ENCODE measurements at regions of chr2 and their contacts with region 1.

Region 1: DNA sequence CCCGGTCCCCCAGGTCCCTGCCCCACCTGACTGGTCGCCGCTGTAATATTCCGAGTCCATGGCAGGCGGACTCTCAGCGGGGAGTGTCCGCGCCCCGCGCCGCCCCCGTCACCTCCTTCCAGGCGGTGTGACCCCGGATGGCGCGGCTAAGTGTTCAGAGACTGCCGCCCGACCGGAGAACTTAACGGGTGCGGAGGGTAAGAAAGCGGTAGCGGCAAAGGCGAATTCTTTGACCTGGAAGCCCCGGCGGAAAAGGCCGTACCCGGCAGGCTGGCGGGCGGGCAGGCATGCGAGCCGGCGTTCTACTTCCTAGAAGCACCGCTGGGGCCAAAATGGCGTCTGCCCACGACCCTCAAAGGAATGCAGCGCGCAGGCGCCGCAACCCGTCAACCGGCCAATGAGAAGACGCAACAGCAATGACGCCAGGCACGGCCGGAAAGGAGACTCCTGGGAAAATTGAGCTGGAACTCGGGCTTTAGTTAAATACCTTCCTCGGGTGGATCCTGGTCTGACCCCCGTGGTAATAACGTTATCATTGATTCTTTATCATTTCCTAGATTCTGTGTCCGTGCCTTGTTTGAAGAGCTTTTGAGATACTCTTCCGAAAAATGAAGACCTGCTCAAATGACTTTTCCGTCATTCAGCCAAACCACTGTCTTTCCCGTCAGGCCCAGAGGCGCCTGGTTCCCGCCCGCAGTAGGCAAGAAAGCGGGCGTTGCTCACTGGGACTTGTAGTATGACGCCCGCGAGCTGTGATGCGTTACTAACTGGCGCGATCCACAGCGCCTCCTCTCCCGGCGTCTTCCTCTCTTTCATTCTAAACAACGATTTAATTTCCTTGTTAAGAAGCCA is at the start of gene IWS1:
- DNase-seq: peak; percentile 98
- ATAC-seq: peak; percentile 98
- H3K4me3 ChIP-seq: peak within 1 kb of the TSS; percentile 38 to 87
- H3K27ac ChIP-seq: peak within 1 kb of the TSS; percentile 45 to 49
- H3K4me1 ChIP-seq: no peaks in the 10 kb centered on the region
- H3K27me3 ChIP-seq: no peaks in the 10 kb centered on the region
- total RNA-seq, gene IWS1: 37.1 to 40.2 TPM

Region 2: DNA sequence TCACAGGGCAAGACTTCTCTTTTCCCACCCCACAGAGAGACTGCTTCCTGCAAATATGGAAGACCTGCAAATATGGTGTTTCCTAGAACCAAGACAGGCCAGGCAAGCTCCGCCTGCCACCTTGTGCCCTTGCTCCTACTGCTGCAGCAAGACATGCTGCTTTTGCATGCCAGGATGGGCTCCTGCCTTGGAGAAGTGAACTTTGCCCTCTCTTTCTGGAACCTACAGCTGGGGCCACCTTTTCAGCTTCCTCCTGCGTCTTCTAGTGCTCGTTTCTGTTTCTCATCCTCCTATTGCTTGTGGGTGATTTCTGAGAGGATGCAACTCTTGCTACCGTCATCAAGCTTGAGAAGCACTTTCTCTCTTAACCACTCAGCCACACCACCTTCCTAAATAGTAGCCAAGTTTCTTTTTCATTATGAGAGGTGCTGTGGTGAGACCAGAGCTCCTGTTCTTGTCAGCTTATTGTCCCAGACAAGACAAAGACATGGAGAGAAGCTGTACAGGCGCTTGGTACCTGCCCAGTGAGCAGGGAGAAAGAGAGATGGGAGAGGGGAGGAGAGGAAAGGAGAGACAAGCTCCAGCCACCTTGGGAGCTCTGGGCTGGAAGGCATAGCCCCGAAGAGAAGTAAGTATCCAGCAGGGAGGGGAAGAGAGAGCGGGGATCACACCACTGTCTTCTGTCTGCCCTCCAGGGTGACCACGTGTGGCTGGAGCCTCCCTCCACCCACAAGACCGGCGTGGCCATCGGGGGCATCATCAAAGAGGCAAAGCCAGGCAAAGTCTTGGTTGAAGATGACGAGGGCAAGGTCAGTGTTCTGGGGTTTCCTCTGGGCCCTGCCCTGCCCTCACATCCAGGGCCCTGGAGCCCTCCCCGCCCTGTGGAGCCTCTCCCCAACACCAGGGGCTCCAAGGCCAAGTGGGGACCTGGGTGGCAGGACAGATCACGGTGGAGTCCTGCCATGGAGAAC is 37.4 kb after region 1 on chr2:
- intact Hi-C with region 1: loop called (anchors 2 to 5 kb)
- DNase-seq: no peak
- ATAC-seq: no peak
- H3K4me3 ChIP-seq: no peak overlapping the region
- H3K27ac ChIP-seq: no peak overlapping the region
- H3K4me1 ChIP-seq: peaks cover 0 to 8% of the 10 kb centered on the region in 2 donors
- H3K27me3 ChIP-seq: no peaks in the 10 kb centered on the region

Region 3: GRCh38 chr2:127637725-127638252 is 111.4 kb after region 1 on chr2:
- intact Hi-C with region 1: loop called (anchors 5 to 10 kb)
- DNase-seq: no peak
- ATAC-seq: peak; percentile 25
- H3K4me3 ChIP-seq: no peak overlapping the region
- H3K27ac ChIP-seq: peak overlapping the region in 1 of 2 donors; percentile 79
- H3K4me1 ChIP-seq: no peaks in the 10 kb centered on the region
- H3K27me3 ChIP-seq: no peaks in the 10 kb centered on the region

Region 4: DNA sequence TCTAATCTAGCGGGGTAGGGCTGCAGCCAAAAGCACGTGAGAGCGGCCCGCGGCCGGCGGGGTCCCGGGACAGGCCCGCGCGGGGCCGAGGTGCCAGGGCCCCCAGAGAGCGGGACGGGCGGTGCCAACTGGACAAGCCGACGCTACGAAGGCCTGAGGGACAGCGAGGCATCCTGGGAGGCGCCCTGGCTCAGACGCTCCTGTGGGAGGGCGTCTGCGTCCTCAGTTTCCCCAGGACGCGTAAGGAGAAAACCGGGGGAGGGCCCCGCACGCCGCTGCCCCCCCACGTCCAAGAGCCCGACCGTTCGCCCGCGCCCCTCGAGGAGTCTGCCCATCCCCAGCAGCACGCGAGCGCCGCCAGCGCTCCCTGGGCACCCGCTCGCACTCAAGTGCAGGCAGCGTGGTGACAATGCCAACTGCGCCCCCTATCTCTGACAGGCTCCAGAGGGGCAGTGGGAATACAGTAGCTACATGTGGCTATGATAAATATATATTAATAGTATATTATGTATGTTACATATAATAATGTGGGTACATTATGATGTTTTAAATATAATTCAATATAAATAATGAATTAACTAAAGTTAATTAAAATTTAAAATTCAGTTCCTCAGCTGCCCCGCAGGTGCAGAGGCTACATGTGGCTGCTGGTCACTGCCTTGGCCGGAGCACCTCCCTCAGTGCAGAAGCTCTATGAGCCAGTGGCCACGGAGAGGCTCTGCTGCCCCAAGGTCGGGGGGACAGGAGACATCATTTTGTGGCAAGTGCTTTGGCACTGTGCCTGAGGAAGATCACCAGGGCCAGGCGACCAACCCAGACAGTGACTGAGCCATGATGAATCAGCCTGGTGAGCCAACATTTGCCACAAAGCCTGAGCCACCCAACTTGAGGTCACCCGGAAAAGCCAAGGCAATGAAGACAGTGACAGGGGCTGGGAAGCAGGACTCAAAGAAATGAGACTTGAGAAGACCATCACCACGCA is 169.4 kb after region 1 on chr2:
- intact Hi-C with region 1: loop called in 1 of 2 experiments (anchors 5 kb)
- DNase-seq: peak; percentile 74 to 93
- ATAC-seq: peak; percentile 83
- H3K4me3 ChIP-seq: no peak overlapping the region
- H3K27ac ChIP-seq: peak overlapping the region; percentile 47 to 60
- H3K4me1 ChIP-seq: no peaks in the 10 kb centered on the region
- H3K27me3 ChIP-seq: no peaks in the 10 kb centered on the region